Head of caudate nucleus (tissue), 42 donors: ENCODE measurements at regions of chr20 and their contacts with region 1.

Region 1: DNA sequence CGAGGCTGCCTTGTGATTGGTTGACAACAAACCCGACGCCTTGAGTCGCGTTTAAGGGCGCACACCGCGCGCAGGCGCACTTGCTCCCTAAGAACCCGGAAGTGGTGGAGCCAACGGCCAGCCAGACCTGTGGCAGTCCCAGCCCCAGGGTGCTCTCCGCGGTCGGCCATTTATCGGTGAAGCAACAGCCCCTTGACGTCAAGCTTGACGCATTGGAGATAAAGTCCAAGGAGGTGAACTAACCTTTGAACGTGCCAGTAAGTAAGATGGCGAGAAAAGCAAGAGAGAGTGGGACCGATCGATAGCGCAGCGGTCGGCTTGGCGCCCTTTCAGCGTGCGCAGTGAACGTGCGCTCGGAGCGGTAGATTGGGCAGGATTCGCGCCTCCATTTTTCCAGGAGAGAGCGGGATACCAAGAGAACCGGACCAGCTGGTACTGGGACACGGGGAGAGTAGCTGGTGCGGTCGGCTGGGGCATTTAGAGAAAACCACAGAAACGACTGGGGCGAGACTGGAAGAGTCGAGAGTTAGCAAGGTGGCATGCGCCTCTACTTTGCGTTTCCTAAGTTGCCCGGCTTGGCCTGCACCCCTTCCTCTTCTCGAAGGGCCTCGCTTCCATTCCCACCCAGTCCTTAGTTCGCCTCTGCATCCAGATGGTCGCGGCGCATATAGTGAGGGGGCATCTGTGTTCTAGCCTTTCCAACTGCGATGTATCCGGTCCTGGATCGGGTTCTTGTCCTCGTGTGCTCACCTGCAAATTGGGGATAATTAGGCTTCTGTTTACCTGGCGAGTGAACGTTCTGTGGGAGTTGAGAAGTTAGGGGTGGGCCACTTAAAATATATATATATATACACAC is at the start of gene CSTF1:
- DNase-seq: peak; percentile 96 to 100 (median 99)

Region 2: GRCh38 chr20:56358596-56359211 is 33.8 kb before region 1 on chr20 and contains the start of gene FAM210B:
- intact Hi-C with region 1: loop called (anchors 2 kb)
- DNase-seq: peak; percentile 73 to 97 (median 92)

Region 3: DNA sequence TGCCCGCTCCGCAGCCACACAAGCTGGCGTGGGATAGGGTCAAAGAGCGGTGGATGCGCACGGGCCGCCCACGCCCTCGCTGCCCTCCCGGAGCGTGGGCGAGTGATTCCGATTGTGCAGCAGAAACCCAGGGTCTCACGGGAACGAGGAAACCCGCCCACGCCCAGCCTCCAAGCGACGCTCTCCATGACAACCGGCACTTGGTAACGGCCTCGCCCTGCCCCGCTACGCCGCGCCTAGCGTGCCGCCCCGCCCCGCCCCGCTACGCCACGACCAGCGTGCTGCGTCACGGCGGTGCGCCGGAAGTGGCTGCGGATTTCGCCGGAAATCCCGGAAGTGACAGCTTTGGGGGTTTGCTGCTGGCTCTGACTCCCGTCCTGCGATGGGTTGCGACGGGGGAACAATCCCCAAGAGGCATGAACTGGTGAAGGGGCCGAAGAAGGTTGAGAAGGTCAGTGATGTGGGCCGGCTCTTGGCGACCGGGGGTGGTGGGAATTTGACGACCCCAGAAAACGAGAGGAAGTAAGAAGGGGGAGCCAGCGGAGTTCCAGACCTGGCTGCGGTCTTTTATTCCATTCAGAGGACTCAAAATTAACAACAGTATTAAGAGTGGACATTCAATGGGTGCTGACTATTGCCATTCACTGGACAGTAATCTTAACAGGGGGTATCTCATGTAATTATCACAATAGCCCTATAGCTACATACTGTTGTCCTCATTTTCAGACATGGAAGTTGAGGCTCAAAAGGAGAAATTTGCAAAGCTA is 76.0 kb after region 1 on chr20 and contains the start of gene RTF2:
- intact Hi-C with region 1: loop called (anchors 5 kb)
- DNase-seq: peak; percentile 89 to 98 (median 96)